HAP-1 (cell line): ENCODE measurements at regions of chr10 and their contacts with region 1.

Region 1: GRCh38 chr10:132648072-132648850 is 110.7 kb downstream of the INPP5A start:
- DNase-seq: peak; percentile 43 to 63
- H3K4me3 ChIP-seq: no peak overlapping the region
- H3K4me1 ChIP-seq: peaks cover 20% of the 10 kb centered on the region
- H3K27me3 ChIP-seq: no peaks in the 10 kb centered on the region

Region 2: GRCh38 chr10:132389433-132390169 is 258.7 kb before region 1 on chr10:
- in situ Hi-C with region 1: loop called (anchors 5 kb)
- DNase-seq: no peak
- H3K4me3 ChIP-seq: no peak overlapping the region
- H3K4me1 ChIP-seq: no peaks in the 10 kb centered on the region
- H3K27me3 ChIP-seq: no peaks in the 10 kb centered on the region